Dorsolateral prefrontal cortex (tissue), 120 donors: ENCODE measurements at regions of chr7 and their contacts with region 1.

Region 1: GRCh38 chr7:10122551-10123100 is 851.0 kb upstream of the PHF14 start:
- DNase-seq: peak; percentile 19 to 87 (median 76)
- H3K4me3 ChIP-seq: peak overlapping the region in 55 of 59 donors; percentile 4 to 64 (median 34)
- H3K27ac ChIP-seq: peak overlapping the region; percentile 44 to 98 (median 91)
- H3K27me3 ChIP-seq: no peaks in the 10 kb centered on the region
- CTCF ChIP-seq: peak in 8 of 56 donors; percentile 12 to 35 (median 22)

Region 2: GRCh38 chr7:9981742-9982349 is 140.8 kb before region 1 on chr7:
- intact Hi-C with region 1: no loop called
- DNase-seq: no peak
- H3K4me3 ChIP-seq: no peak overlapping the region
- H3K27ac ChIP-seq: no peak overlapping the region
- H3K27me3 ChIP-seq: no peaks in the 10 kb centered on the region
- CTCF ChIP-seq: no peak

Region 3: DNA sequence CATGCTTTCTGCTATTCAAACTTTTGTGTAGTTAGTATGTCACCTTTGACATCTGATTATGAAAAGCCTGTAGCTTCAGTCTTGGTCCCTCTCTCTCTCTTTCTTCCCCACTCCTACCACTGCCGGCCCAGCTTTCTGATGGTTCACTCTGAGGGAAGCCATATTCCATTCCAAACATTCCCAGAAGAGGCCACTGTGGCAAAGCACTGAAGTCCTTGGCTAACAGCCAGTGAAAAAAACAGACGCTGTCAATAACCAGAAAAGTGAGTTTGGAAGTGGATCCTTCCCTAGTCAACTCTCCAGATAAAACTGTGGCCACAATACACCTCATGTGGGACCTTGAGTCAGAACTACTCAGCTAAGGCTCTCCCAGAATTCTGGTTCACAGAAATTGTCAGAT is 99.7 kb before region 1 on chr7:
- intact Hi-C with region 1: loop called in 1 of 2 experiments (anchors 5 kb)
- DNase-seq: peak in 3 of 10 donors; percentile 13 to 41 (median 32)
- H3K4me3 ChIP-seq: no peak overlapping the region
- H3K27ac ChIP-seq: no peak overlapping the region
- H3K27me3 ChIP-seq: no peaks in the 10 kb centered on the region
- CTCF ChIP-seq: peak in 55 of 56 donors; percentile 19 to 81 (median 58)